Posterior vena cava (tissue), 2 donors: ENCODE measurements at regions of chrX and their contacts with region 1.

Region 1: GRCh38 chrX:45621376-45622041 is 420.8 kb upstream of the DIPK2B start:
- DNase-seq: no peak

Region 2: DNA sequence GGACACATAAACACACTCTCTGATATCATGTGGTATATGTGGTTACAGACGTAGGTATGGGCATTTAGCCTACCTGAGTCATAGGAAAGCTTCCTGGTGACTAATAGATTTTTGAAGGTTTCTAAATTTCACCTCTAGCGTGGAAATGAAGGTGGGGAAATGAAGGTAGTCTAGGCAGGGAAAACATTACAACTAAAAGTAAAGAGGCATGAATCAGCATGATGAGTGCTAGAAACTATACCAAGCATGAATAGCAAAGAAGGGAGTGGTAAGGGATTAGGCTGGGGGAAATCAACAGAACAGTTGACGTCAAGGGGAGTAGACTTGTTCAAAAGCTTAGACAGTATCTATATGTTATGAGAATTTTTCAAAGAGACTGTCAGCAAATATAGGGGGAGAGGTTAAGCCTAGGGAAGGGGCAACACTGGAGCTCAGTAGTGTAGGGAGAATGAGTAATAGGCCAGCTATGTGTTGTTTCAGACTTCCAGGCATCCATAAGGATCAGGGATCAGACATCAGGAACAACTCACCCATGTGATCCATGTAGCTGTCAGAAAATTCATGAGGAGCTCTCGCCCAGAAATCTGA is 141.6 kb before region 1 on chrX:
- intact Hi-C with region 1: no loop called
- DNase-seq: no peak

Region 3: DNA sequence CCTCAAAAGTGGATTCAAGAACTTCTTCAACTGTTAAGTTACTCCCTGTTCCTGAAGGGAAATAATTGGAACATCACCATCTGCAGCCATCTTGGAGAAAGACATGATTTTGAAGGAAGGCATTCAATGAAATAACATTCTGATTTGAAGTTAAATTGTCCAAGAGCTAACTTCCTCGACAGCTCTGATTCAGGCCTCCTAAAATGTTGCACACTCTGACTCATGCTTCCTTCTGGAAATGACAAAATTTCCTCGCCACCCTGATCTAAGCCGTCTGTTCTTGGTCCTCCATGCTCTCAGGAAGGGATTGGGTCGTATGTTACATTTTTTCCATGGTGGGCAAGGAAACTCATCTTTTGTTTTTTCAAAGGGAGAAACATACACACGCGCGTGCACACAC is 76.1 kb after region 1 on chrX:
- intact Hi-C with region 1: loop called in 1 of 2 experiments (anchors 2 kb)
- DNase-seq: no peak

Region 4: DNA sequence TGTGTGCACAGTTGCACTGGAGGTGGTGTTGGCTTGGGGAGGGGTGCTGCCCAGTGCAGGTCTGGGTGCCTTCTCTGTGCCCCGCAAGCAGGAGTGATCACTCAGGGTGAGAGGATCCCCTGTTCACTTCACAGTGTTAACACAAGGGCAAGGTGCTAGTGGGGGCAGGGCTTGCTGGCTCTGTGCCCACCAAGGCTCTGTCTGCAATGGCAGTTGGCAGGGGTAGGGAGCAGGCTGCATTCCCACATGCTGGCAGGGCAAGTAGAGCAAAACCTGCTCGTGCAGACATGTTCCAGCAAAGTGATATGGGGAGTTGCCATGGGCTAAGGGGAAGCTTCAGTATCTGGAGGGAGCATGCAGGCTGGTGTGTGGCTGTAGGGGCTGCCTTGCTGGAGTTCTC is 495.7 kb after region 1 on chrX:
- intact Hi-C with region 1: no loop called
- DNase-seq: peak; percentile 67